H1 (cell line): ENCODE measurements at regions of chr10 and their contacts with region 1.

Region 1: DNA sequence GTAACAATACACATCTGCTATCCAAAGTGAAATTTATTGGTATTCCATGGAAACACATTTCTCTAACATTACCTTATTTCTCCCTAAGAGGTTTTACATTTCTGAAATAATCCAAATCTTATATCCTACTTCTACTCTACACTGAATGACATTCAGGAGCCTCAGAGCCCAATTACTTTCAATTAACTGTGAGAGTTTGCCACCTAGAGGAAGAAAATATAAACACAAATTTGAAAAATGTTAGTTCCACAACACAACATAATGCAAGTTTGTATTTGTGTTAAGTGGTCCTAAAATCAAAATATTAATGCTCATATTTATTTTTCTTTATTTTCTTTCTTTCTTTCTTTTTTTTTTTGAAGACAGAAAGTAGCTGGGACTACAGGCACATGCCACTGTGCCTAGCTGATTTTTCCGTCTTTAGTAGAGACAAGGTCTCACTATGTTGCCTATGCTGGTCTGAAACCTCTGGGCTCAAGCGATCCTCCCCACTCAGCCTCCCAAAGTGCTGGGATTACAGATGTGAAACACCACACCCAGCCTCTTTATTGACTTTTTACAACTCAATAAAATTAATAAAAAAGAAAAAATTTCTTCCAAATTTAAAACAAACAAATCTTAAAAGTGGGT is 46.0 kb downstream of the ATAD1 start:
- DNase-seq: no peak
- H3K4me3 ChIP-seq: no peak overlapping the region
- H3K27ac ChIP-seq: no peak overlapping the region
- H3K4me1 ChIP-seq: no peaks in the 10 kb centered on the region
- H3K27me3 ChIP-seq: no peaks in the 10 kb centered on the region
- CTCF ChIP-seq: peak in 2 of 3 experiments; percentile 26 to 33; a peak in 2 of 4 replicates
- EP300 ChIP-seq: no peak
- POLR2A ChIP-seq: no peak
- RAD21 ChIP-seq: peak; percentile 51 to 68

Region 2: DNA sequence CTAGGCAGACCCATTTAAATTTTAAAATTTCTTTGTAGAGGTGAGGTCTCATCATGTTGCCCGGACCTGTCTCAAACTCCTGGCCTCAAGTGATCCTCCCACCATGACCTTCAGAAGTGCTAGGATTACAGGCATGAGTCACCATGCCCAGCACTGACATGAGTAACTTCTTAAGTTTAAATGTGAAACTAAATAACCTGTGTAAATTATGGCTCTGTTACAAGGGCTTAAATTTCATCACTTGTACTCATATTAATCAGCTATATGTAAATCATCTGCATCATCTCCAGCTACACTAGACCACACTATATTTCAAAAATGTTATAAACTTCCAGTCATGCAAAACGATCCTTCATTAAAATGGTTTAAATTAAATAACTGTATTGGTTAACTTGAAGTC is 10.1 kb before region 1 on chr10:
- CTCF ChIA-PET with region 1: interaction called, 27 read pairs
- POLR2A ChIA-PET with region 1: interaction called, 3 read pairs
- DNase-seq: no peak
- H3K4me3 ChIP-seq: no peak overlapping the region
- H3K27ac ChIP-seq: no peak overlapping the region
- H3K4me1 ChIP-seq: no peaks in the 10 kb centered on the region
- H3K27me3 ChIP-seq: no peaks in the 10 kb centered on the region
- CTCF ChIP-seq: no peak
- EP300 ChIP-seq: no peak
- POLR2A ChIP-seq: no peak
- RAD21 ChIP-seq: no peak